Activated CD8-positive, alpha-beta memory T cell treated with anti-CD3 and anti-CD28 coated beads, Interleukin-2, amount 10 ng/mL, durations not matched to agents 7 days and 5 days (primary cell): ENCODE measurements at regions of chr7 and their contacts with region 1.

Region 1: GRCh38 chr7:92621026-92621540 is 30.9 kb upstream of the FAM133B start:
- DNase-seq: peak; percentile 91
- ATAC-seq: peak; percentile 77
- H3K4me3 Mint-ChIP-seq: peak overlapping the region; percentile 19
- H3K27ac Mint-ChIP-seq: peak overlapping the region; percentile 92
- H3K4me1 Mint-ChIP-seq: peaks cover 56% of the 10 kb centered on the region
- H3K27me3 Mint-ChIP-seq: no peaks in the 10 kb centered on the region

Region 2: DNA sequence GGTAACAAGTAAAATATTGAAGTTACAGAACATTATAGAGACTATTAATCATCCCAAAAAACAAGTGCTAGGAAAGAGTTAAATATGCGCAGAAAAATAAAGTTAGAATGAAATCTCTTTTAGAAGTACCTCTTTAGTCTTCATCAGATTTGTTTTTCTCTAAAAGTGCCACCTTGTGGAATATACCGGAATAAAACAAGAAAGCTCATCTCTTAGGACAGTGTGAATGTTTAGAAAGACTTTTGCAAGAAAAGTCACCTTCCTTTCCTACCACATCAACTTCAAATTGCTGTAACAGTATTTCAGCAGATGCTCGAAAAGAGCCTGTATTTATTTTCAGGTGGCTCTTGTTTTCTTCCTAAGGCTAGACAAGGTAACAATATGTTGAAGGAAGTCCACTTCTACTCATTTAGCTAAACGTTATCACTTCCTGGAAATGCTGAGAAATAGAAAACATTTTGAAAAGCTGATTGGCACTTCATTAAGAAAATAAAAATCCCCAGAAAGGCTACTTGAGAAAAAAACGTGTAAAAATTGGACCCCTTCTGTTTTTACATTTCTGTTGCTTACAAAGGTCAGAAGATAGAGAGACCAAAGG is 11.1 kb before region 1 on chr7:
- CTCF ChIA-PET with region 1: interaction called, 20 read pairs
- DNase-seq: no peak
- ATAC-seq: peak; percentile 66
- H3K4me3 Mint-ChIP-seq: no peak overlapping the region
- H3K27ac Mint-ChIP-seq: peak overlapping the region; percentile 74
- H3K4me1 Mint-ChIP-seq: peaks cover 43% of the 10 kb centered on the region
- H3K27me3 Mint-ChIP-seq: no peaks in the 10 kb centered on the region

Region 3: DNA sequence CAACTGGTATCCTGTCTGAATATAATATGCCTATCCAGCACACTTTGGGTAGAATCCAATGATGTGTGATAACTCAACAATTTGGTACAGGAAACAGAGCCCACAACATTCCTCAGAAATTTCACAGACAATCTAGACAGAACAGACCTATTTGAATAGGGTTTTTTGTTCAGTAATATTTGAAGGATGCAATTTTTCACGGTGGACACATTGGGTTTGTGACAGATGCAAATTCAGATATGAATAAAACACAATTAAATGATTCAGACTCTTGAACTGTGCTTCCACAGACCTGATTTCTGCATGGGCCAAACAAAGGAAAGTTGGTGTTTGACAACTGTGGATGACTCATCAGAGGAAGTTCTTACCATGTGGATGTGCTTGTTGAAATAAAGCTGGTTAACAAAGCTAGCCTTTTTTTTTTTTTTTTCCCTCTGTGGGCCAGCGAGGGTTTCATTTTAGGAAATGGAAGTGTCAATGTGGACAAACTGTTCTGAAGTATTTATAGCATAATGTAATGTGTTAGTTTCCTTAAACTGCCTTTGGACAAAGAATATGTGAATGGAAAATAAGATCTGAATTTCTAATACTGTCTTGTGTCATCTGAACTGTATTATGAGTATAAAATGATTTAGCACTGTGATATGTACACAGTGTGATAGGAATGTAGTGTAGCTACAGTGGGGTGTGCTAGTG is 12.3 kb after region 1 on chr7:
- CTCF ChIA-PET with region 1: interaction called, 20 read pairs
- DNase-seq: no peak
- ATAC-seq: peak; percentile 68
- H3K4me3 Mint-ChIP-seq: peak overlapping the region; percentile 50
- H3K27ac Mint-ChIP-seq: peak overlapping the region; percentile 87
- H3K4me1 Mint-ChIP-seq: peaks cover 69% of the 10 kb centered on the region
- H3K27me3 Mint-ChIP-seq: no peaks in the 10 kb centered on the region

Region 4: DNA sequence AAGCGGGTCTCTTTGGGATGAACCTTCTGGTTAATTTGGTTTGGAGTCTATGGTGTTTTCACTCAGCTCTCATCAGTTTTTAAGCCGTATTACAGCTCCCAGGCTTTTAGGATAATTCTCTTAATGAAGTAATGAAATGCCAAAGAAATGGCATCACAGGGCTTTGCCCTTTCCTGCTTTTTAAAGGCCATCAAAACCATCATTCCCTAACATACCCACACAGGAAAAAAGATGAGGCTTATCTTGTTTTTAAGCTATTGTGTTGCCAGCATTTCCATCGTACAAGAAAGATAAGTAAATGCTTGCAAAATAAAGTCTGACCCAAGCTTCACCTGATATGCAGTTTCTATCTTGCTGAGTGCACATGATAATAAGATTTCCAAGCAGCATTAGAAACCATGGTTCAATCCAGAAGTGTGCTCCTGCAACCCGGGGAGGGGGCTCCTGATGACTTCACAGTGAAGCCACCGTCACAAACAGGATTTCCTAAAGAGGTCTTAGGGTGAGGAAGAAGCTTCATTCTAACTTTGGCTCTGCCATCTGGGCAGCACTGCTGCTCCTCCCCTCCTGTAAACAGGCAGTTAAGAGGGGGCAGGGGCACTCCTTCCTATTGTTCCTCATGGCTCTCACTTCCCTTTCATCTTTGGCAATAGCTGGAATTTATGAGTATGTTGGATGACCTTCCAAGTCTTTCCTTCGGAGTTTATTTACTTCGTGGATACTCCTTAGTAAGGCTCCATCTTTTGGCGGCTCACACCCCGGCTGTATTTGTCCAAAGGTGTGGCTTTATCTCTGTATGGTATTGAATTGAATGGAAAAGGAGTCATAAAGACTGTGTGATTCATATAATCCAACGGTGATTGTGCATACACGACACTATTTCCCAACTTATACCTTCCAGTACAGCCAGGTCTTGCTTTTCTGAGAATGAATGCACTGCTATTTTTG is 24.3 kb after region 1 on chr7:
- CTCF ChIA-PET with region 1: interaction called, 11 read pairs
- DNase-seq: no peak
- ATAC-seq: peak; percentile 11
- H3K4me3 Mint-ChIP-seq: no peak overlapping the region
- H3K27ac Mint-ChIP-seq: peak overlapping the region; percentile 55
- H3K4me1 Mint-ChIP-seq: peaks cover 93% of the 10 kb centered on the region
- H3K27me3 Mint-ChIP-seq: no peaks in the 10 kb centered on the region